WTC11 (cell line): ENCODE measurements at regions of chr16 and their contacts with region 1.

Region 1: DNA sequence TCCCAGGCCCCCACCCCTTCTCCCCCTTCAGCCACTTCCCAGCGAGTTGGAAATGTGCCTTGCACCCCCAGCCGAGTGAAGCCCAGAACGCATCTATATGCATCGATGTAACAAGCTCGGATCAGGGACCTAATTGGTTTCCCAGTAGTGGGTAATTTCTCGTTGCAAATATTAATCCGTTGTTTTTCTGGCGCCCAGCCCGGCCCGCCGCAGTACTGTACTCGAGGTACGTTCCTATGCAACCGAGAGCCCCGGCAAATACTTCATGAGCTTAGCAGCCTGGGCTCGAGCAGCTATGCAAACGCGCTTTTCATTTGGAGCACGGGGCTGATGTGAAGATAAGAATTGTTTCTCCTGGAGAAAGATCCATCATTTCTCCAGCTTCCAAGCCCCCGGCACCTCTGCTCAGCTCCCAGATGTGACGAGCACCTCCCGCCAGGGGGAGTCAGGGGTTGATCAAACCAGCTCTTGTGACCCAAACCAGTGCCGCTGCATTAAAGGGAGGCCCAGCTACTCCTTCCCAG is 229.8 kb downstream of the KATNIP start:
- DNase-seq: peak; percentile 82
- ATAC-seq: peak; percentile 90
- H3K4me3 Mint-ChIP-seq: no peak overlapping the region
- H3K27ac Mint-ChIP-seq: no peak overlapping the region
- H3K4me1 Mint-ChIP-seq: 0 out of 2 replicates have a peak, but pooled peaks cover 2% of the 10 kb centered on the region
- H3K27me3 Mint-ChIP-seq: no peaks in the 10 kb centered on the region
- CTCF ChIP-seq: peak; percentile 31; the same call in 1 of the 2 replicates

Region 2: GRCh38 chr16:27698266-27698665 is 81.4 kb before region 1 on chr16:
- CTCF ChIA-PET with region 1: interaction called, 19 read pairs
- POLR2A ChIA-PET with region 1: no interaction called
- DNase-seq: peak; percentile 94
- ATAC-seq: peak; percentile 94
- H3K4me3 Mint-ChIP-seq: no peak overlapping the region
- H3K27ac Mint-ChIP-seq: no peak overlapping the region
- H3K4me1 Mint-ChIP-seq: peaks cover 21% of the 10 kb centered on the region
- H3K27me3 Mint-ChIP-seq: no peaks in the 10 kb centered on the region
- CTCF ChIP-seq: peak; percentile 61

Region 3: DNA sequence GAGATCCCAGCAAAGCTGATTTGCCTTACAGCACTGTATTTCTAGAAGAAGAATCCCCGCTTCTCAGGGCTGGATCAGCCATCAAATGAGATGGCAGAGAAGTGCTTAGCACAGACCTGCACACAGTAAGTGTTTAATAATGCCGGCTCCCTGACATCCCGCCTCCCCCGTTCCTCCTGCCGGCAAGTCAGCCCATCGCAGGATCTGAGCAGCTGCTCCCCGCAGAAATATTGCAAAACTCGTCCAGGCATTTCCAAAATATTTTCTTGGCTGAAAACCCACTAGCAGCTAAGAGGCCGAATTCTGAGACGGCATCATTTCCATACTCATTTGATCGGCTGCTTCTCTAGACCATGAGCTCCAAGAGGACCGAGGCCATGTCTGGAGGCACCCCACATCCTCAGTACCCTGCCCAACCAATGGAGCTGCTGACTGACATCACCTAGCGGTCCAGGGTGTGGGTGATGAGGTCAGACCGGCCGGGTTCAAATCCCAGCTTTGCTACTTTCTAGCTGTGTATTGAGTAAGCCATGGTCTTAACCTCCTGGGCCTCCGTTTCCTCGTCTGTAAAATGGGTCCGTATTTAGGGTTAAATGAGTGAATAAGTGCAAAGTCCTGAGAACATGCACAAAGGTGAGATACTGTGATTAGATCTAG is 21.7 kb after region 1 on chr16:
- CTCF ChIA-PET with region 1: interaction called, 12 read pairs
- POLR2A ChIA-PET with region 1: no interaction called
- DNase-seq: no peak
- ATAC-seq: no peak
- H3K4me3 Mint-ChIP-seq: no peak overlapping the region
- H3K27ac Mint-ChIP-seq: no peak overlapping the region
- H3K4me1 Mint-ChIP-seq: peaks cover 10% of the 10 kb centered on the region
- H3K27me3 Mint-ChIP-seq: no peaks in the 10 kb centered on the region
- CTCF ChIP-seq: no peak

Region 4: GRCh38 chr16:27853101-27853500 is 73.4 kb after region 1 on chr16:
- CTCF ChIA-PET with region 1: interaction called, 39 read pairs
- POLR2A ChIA-PET with region 1: no interaction called
- DNase-seq: no peak
- ATAC-seq: no peak
- H3K4me3 Mint-ChIP-seq: no peak overlapping the region
- H3K27ac Mint-ChIP-seq: no peak overlapping the region
- H3K4me1 Mint-ChIP-seq: peaks cover 34% of the 10 kb centered on the region
- H3K27me3 Mint-ChIP-seq: no peaks in the 10 kb centered on the region; the same call in 1 of the 2 replicates
- CTCF ChIP-seq: no peak

Region 5: GRCh38 chr16:28069971-28070794 is 290.5 kb after region 1 on chr16:
- CTCF ChIA-PET with region 1: interaction called, 12 read pairs
- POLR2A ChIA-PET with region 1: no interaction called
- DNase-seq: no peak
- ATAC-seq: no peak; the same call in 1 of the 2 replicates
- H3K4me3 Mint-ChIP-seq: no peak overlapping the region
- H3K27ac Mint-ChIP-seq: no peak overlapping the region
- H3K4me1 Mint-ChIP-seq: peaks cover 11% of the 10 kb centered on the region; the same call in 1 of the 2 replicates
- H3K27me3 Mint-ChIP-seq: peaks cover 13% of the 10 kb centered on the region
- CTCF ChIP-seq: no peak

Region 6: GRCh38 chr16:28211712-28212534 is 432.2 kb after region 1 on chr16 and contains the start of gene XPO6:
- CTCF ChIA-PET with region 1: no interaction called
- POLR2A ChIA-PET with region 1: no interaction called
- DNase-seq: peak; percentile 96
- ATAC-seq: peak; percentile 89
- H3K4me3 Mint-ChIP-seq: peak within 1 kb of the TSS; percentile 89
- H3K27ac Mint-ChIP-seq: peak within 1 kb of the TSS; percentile 99
- H3K4me1 Mint-ChIP-seq: peaks cover 20% of the 10 kb centered on the region
- H3K27me3 Mint-ChIP-seq: no peaks in the 10 kb centered on the region
- CTCF ChIP-seq: no peak
- total RNA-seq, gene XPO6: 125 to 160 TPM (median 133 TPM) in 3 replicates